Activated B cell treated with CpG ODN at 0.5 μM for 24 hours (primary cell): ENCODE measurements at regions of chr3 and their contacts with region 1.

Region 1: GRCh38 chr3:188244395-188244861 is 90.5 kb downstream of the LPP start:
- DNase-seq: no peak
- ATAC-seq: peak; percentile 78
- H3K4me3 Mint-ChIP-seq: peak overlapping the region; percentile 24
- H3K27ac Mint-ChIP-seq: peak overlapping the region; percentile 62
- H3K4me1 Mint-ChIP-seq: peaks cover 74% of the 10 kb centered on the region
- H3K27me3 Mint-ChIP-seq: no peaks in the 10 kb centered on the region
- CTCF ChIP-seq: no peak

Region 2: GRCh38 chr3:188294823-188295487 is 50.5 kb after region 1 on chr3:
- CTCF ChIA-PET with region 1: no interaction called
- POLR2A ChIA-PET with region 1: interaction called, 3 read pairs
- intact Hi-C with region 1: loop called (anchors 2 kb)
- DNase-seq: no peak
- ATAC-seq: no peak
- H3K4me3 Mint-ChIP-seq: peak overlapping the region; percentile 17
- H3K27ac Mint-ChIP-seq: peak overlapping the region; percentile 25
- H3K4me1 Mint-ChIP-seq: peaks cover 85% of the 10 kb centered on the region
- H3K27me3 Mint-ChIP-seq: no peaks in the 10 kb centered on the region
- CTCF ChIP-seq: no peak